ENCODE measurements at regions of chr16 and their contacts with region 1.

Region 1: GRCh38 chr16:67561824-67562525 is 351 bp upstream of the CTCF start:
- DNase-seq: peak; percentile 98
- H3K4me3 ChIP-seq: peak overlapping the region; percentile 78 to 98 (median 88)
- H3K27ac ChIP-seq: peak overlapping the region; percentile 99 to 100 (median 100)
- H3K4me1 ChIP-seq: peaks cover 22 to 44% (median 35%) of the 10 kb centered on the region in 4 donors
- H3K27me3 ChIP-seq: no peaks in the 10 kb centered on the region
- CTCF ChIP-seq: no peak
- EP300 ChIP-seq: no peak
- POLR2A ChIP-seq: no peak

Region 2: DNA sequence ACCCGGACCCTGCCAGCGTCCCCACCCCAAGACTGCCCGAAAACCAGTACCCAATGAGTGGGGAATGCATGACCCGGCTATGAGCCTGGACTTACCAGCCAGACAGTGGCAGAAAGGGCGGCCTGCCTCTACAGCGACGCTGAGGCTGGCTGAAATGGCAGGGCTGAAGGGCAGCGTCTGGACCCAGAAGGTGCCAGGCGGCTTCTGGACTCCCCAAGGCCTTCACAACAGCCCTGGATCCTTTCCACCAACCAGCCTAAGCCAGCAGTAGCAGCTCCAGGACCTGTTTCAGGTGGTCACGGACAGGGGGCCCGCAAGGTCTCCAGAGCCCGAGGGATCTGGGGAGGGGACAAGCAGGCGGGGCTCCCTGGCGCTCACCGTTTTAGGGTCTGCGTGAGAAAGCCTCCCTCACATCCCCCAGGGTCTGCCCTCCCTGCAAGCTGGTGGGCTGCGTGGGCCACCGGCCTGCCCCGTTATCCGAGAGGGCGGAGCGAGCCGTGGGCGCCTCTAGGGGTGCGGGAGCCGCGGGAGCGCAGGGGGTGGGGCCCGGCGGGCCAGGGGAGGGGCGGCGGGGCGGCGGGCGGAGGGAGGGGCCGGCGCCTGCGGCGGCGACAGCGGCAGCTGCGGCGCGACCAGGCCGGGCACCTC is 33.6 kb before region 1 on chr16 and contains the start of gene RIPOR1:
- intact Hi-C with region 1: loop called (anchors 2 kb)
- DNase-seq: no peak
- H3K4me3 ChIP-seq: peak within 1 kb of the TSS; percentile 75 to 95 (median 88)
- H3K27ac ChIP-seq: peak within 1 kb of the TSS; percentile 86 to 95 (median 93)
- H3K4me1 ChIP-seq: peaks cover 36 to 48% (median 43%) of the 10 kb centered on the region in 4 donors
- H3K27me3 ChIP-seq: no peaks in the 10 kb centered on the region
- CTCF ChIP-seq: peak in 1 of 3 experiments; percentile 4
- EP300 ChIP-seq: no peak
- POLR2A ChIP-seq: no peak
- total RNA-seq, gene RIPOR1: 63.1 to 108 (median 68.4) TPM

Region 3: GRCh38 chr16:67632415-67633172 is 70.6 kb after region 1 on chr16:
- intact Hi-C with region 1: loop called (anchors 5 kb)
- DNase-seq: no peak
- H3K4me3 ChIP-seq: no peak overlapping the region
- H3K27ac ChIP-seq: peak overlapping the region in 3 of 4 donors; percentile 0 to 49 (median 23)
- H3K4me1 ChIP-seq: peaks cover 6 to 17% (median 12%) of the 10 kb centered on the region in 4 donors
- H3K27me3 ChIP-seq: no peaks in the 10 kb centered on the region
- CTCF ChIP-seq: no peak
- EP300 ChIP-seq: no peak
- POLR2A ChIP-seq: no peak

Region 4: GRCh38 chr16:67660564-67661028 is 98.6 kb after region 1 on chr16 and contains the start of gene PARD6A:
- intact Hi-C with region 1: loop called (anchors 2 kb)
- DNase-seq: peak; percentile 98
- H3K4me3 ChIP-seq: peak within 1 kb of the TSS; percentile 74 to 96 (median 85)
- H3K27ac ChIP-seq: peak within 1 kb of the TSS; percentile 95 to 99 (median 98)
- H3K4me1 ChIP-seq: peaks cover 19 to 43% (median 34%) of the 10 kb centered on the region in 4 donors
- H3K27me3 ChIP-seq: no peaks in the 10 kb centered on the region
- CTCF ChIP-seq: peak in 1 of 3 experiments; percentile 17
- EP300 ChIP-seq: peak; percentile 7
- POLR2A ChIP-seq: no peak
- total RNA-seq, gene PARD6A: 11.3 to 22.8 (median 16.0) TPM

Region 5: GRCh38 chr16:67719048-67719777 is 157.2 kb after region 1 on chr16 and contains the start of gene GFOD2:
- intact Hi-C with region 1: loop called (anchors 5 kb)
- DNase-seq: peak; percentile 98
- H3K4me3 ChIP-seq: peak within 1 kb of the TSS; percentile 92 to 99 (median 95)
- H3K27ac ChIP-seq: peak within 1 kb of the TSS; percentile 84 to 92 (median 86)
- H3K4me1 ChIP-seq: peaks cover 21 to 29% (median 25%) of the 10 kb centered on the region in 4 donors
- H3K27me3 ChIP-seq: no peaks in the 10 kb centered on the region
- CTCF ChIP-seq: peak in 1 of 3 experiments; percentile 22
- EP300 ChIP-seq: no peak
- POLR2A ChIP-seq: peak; percentile 59
- total RNA-seq, gene GFOD2: 9.1 to 24.2 (median 20.8) TPM